Upper lobe of right lung (tissue), 1 donor: ENCODE measurements at regions of chr9 and their contacts with region 1.

Region 1: DNA sequence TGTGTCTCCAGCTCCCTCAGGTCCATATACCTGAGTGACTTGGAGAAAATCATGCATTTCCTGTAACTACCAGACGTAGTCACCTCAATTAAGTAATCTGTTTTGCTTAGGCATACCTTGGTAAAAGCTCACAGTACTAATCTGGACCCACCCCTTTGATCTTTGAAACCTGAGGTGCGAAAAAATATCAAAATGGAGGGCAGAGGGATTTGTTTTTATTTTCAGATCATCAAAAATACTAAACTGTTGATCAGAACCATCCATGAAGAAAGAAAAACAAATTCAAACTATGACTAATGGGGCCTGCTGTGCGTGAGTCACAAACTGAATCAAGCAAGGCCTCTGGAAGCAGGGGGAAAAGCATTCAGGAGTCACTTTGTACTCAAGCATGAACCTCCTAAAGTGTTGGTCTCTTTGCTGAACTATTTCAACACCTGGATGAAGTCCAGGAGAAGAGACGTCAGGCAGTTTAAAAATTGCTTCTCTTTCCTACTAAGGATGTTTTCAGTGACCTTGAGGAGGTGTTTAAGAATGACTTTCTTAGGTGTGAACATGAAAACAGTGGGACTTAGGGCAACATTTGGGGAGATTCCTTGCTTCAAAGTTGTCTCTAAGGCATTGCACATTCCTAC is 76.3 kb downstream of the MUSK start:
- DNase-seq: no peak
- ATAC-seq: peak; percentile 79
- H3K4me3 ChIP-seq: no peak overlapping the region
- H3K27ac ChIP-seq: peak overlapping the region; percentile 52
- H3K4me1 ChIP-seq: peaks cover 3% of the 10 kb centered on the region
- H3K27me3 ChIP-seq: no peaks in the 10 kb centered on the region
- CTCF ChIP-seq: no peak

Region 2: GRCh38 chr9:110650991-110651411 is 93.9 kb before region 1 on chr9:
- intact Hi-C with region 1: no loop called
- DNase-seq: no peak
- ATAC-seq: no peak
- H3K4me3 ChIP-seq: no peak overlapping the region
- H3K27ac ChIP-seq: no peak overlapping the region
- H3K4me1 ChIP-seq: no peaks in the 10 kb centered on the region
- H3K27me3 ChIP-seq: no peaks in the 10 kb centered on the region
- CTCF ChIP-seq: no peak

Region 3: DNA sequence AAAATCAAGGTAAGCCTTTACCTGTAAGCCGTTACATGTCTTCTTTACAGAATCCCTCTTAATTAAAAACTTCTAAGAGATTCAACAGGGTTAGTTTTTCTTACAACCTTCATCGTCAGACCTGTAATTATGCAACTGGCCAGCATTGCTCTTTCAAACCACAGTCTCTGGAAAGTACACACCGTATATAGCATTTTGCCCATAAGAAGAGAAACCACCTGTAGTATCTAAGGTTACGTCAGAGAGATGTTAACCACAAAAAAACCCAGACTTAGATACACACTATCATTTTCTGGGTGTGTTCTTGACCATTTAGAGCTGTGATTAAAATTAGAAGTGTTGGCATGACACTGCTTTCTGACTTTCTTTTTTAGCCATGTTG is 63.7 kb after region 1 on chr9:
- intact Hi-C with region 1: loop called (anchors 10 kb)
- DNase-seq: no peak
- ATAC-seq: no peak
- H3K4me3 ChIP-seq: no peak overlapping the region
- H3K27ac ChIP-seq: no peak overlapping the region
- H3K4me1 ChIP-seq: no peaks in the 10 kb centered on the region
- H3K27me3 ChIP-seq: no peaks in the 10 kb centered on the region
- CTCF ChIP-seq: no peak